ENCODE measurements at regions of chr5 and their contacts with region 1.

Region 1: GRCh38 chr5:68287976-68288706 is 72.6 kb downstream of the PIK3R1 start:
- DNase-seq: peak; percentile 89 to 95 (median 93)
- H3K4me3 ChIP-seq: peak overlapping the region; percentile 73 to 87 (median 74)
- H3K27ac ChIP-seq: peak overlapping the region; percentile 93 to 95
- H3K4me1 ChIP-seq: peaks cover 10 to 36% (median 23%) of the 10 kb centered on the region in 3 donors
- H3K27me3 ChIP-seq: no peaks in the 10 kb centered on the region
- CTCF ChIP-seq: no peak

Region 2: DNA sequence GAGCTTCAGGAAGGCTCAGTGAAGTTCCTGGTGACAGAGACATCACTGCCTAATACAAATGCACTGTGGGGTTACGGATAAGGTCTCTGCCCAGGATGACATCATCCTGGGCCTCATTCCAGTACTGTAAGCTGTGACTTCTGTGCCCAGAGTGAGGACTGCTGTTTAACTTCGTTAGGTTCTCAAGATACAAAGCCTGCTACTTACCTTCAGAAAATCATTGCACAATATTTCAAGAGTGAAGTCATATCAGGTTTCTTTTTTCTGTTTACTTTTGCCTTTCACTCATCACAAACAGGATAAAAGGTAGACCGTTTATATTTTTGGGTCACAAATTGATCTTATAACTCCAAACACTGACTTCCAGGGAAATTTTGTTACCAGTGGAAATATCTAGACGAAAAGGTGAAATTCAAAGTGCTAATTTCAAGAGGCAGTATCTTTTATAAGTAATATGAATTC is 168.6 kb after region 1 on chr5:
- intact Hi-C with region 1: loop called (anchors 10 kb)
- DNase-seq: peak in 2 of 5 donors; percentile 56 to 74
- H3K4me3 ChIP-seq: no peak overlapping the region
- H3K27ac ChIP-seq: no peak overlapping the region
- H3K4me1 ChIP-seq: peaks cover 0 to 16% (median 7%) of the 10 kb centered on the region in 3 donors
- H3K27me3 ChIP-seq: no peaks in the 10 kb centered on the region
- CTCF ChIP-seq: no peak

Region 3: DNA sequence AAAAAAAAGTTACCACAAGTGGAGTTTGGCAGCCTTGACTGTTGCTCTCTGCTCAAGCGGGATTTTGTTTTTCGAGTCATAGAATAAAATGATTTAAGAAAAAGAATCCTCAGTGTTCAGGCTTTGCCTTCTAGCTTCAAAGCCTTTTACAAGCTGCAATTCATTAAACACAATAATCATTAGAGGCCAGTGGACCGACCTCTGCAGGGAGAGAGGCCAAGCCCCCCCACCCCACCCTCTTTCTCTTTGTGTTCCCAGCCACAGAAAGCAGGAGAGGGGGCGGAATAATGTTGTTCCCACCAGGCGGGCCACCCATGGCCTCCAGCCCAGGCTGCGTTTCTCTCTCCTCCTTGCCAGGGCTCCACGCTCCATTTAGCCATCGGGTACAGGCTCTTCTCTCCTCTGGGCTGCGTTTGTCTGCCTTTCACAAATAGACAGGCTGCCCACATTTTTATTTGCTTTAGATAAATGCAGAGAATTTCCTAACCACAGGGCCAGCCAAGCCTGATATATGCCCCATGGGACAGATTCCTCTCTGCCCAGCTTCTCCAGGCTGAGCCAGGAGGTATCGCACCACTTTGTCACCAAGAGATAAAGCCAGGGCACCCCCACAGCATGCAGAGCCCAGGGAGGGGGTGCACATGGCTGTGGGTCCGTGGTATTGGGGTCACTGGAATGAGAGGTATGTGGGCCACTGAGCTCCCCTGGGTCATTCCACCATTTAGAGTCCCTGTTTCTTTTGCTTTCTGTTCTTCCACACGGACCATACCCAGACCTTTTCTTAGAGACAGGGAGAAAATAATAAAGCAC is 246.2 kb after region 1 on chr5:
- intact Hi-C with region 1: loop called (anchors 5 kb)
- DNase-seq: peak in 3 of 5 donors; percentile 46 to 83 (median 82)
- H3K4me3 ChIP-seq: peak overlapping the region in 1 of 3 donors; percentile 12
- H3K27ac ChIP-seq: peak overlapping the region; percentile 38 to 76
- H3K4me1 ChIP-seq: peaks cover 7 to 13% (median 8%) of the 10 kb centered on the region in 3 donors
- H3K27me3 ChIP-seq: no peaks in the 10 kb centered on the region
- CTCF ChIP-seq: no peak